B cell (primary cell): ENCODE measurements at regions of chr7 and their contacts with region 1.

Region 1: DNA sequence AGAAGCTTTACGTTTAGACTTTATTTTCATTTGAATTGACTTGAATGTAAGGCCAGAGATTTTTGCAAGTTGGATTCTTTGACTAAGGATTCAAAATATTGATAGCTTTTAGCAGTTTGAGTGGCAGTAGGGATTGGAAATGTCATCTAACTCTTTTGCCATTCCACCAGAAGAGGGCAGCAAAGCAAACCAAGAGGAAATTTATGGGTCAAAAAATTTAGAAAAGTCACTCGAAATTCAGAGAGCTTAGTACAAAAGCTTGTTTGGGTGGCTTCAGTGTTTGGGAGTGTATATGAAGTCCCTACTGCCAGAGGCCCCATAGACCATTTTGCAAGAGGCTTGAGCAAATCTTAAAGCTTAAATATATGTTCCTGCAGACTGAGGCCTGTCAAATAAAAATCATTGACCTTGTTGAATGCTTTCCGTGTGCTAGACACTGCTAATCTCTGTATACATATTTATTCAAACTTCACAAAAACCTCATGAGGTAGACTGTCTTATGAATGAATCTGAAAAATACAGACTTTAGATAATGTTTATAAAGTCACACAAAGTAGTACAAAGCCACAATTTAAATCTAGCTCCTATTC is 44.6 kb upstream of the RSBN1L start:
- DNase-seq: peak; percentile 62
- ATAC-seq: no peak
- H3K4me3 ChIP-seq: no peak overlapping the region
- H3K4me3 Mint-ChIP-seq: no peak overlapping the region
- H3K27ac ChIP-seq: no peak overlapping the region
- H3K27ac Mint-ChIP-seq: no peak overlapping the region
- H3K4me1 ChIP-seq: no peaks in the 10 kb centered on the region
- H3K4me1 Mint-ChIP-seq: no peaks in the 10 kb centered on the region
- H3K27me3 ChIP-seq: no peaks in the 10 kb centered on the region
- H3K27me3 Mint-ChIP-seq: no peaks in the 10 kb centered on the region
- CTCF ChIP-seq: peak; percentile 89

Region 2: GRCh38 chr7:77631820-77632219 is 19.8 kb before region 1 on chr7:
- CTCF ChIA-PET with region 1: interaction called, 14 read pairs
- POLR2A ChIA-PET with region 1: no interaction called
- intact Hi-C with region 1: no loop called
- DNase-seq: no peak
- ATAC-seq: no peak
- H3K4me3 ChIP-seq: no peak overlapping the region
- H3K4me3 Mint-ChIP-seq: no peak overlapping the region
- H3K27ac ChIP-seq: no peak overlapping the region
- H3K27ac Mint-ChIP-seq: no peak overlapping the region
- H3K4me1 ChIP-seq: no peaks in the 10 kb centered on the region
- H3K4me1 Mint-ChIP-seq: no peaks in the 10 kb centered on the region
- H3K27me3 ChIP-seq: no peaks in the 10 kb centered on the region
- H3K27me3 Mint-ChIP-seq: no peaks in the 10 kb centered on the region
- CTCF ChIP-seq: no peak

Region 3: DNA sequence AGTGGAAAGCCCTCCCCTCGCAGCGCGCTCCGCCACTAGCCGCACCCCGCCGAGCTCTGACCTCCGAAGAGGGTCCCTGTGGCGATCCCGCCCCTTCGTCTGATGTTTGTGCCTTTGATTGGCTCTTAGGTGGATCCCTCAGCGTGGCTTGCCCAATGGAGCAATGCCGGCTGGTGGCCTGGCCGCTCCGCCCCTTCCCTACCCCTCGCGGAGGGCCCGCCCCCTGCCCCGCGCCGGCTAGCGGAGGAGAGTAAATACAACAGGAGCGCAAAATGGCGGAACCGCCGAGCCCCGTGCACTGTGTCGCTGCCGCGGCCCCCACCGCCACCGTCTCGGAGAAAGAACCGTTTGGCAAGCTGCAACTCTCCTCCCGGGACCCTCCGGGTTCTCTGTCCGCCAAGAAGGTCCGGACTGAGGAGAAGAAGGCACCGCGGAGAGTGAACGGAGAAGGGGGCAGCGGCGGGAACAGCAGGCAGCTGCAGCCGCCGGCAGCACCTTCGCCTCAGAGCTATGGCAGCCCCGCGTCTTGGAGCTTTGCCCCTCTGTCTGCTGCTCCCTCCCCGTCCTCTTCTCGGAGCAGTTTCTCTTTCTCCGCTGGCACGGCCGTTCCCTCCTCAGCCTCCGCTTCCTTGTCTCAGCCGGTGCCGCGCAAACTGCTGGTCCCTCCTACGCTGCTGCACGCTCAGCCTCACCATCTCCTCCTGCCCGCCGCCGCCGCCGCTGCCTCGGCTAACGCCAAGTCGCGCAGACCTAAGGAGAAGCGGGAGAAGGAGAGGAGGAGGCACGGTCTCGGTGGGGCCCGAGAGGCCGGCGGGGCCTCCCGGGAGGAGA is 44.7 kb after region 1 on chr7 and contains the start of gene RSBN1L:
- CTCF ChIA-PET with region 1: interaction called, 23 read pairs
- POLR2A ChIA-PET with region 1: interaction called, 3 read pairs
- intact Hi-C with region 1: loop called (anchors 5 kb)
- DNase-seq: peak; percentile 97
- ATAC-seq: peak; percentile 94
- H3K4me3 ChIP-seq: peak within 1 kb of the TSS; percentile 72 to 100 (median 84)
- H3K4me3 Mint-ChIP-seq: peak within 1 kb of the TSS; percentile 98
- H3K27ac ChIP-seq: peak within 1 kb of the TSS; percentile 89 to 90
- H3K27ac Mint-ChIP-seq: peak within 1 kb of the TSS; percentile 97
- H3K4me1 ChIP-seq: peaks cover 20 to 35% of the 10 kb centered on the region in 2 donors
- H3K4me1 Mint-ChIP-seq: peaks cover 54% of the 10 kb centered on the region
- H3K27me3 ChIP-seq: no peaks in the 10 kb centered on the region
- H3K27me3 Mint-ChIP-seq: no peaks in the 10 kb centered on the region
- CTCF ChIP-seq: peak; percentile 61
- total RNA-seq, gene RSBN1L: 47.0 and 55.0 TPM in 2 replicates

Region 4: GRCh38 chr7:77940647-77941046 is 289.0 kb after region 1 on chr7:
- CTCF ChIA-PET with region 1: interaction called, 9 read pairs
- POLR2A ChIA-PET with region 1: no interaction called
- intact Hi-C with region 1: loop called (anchors 5 kb)
- DNase-seq: peak; percentile 15
- ATAC-seq: no peak
- H3K4me3 ChIP-seq: no peak overlapping the region
- H3K4me3 Mint-ChIP-seq: no peak overlapping the region
- H3K27ac ChIP-seq: no peak overlapping the region
- H3K27ac Mint-ChIP-seq: no peak overlapping the region
- H3K4me1 ChIP-seq: peaks cover under 1 to 3% of the 10 kb centered on the region in 2 donors
- H3K4me1 Mint-ChIP-seq: peaks cover 14% of the 10 kb centered on the region
- H3K27me3 ChIP-seq: no peaks in the 10 kb centered on the region
- H3K27me3 Mint-ChIP-seq: no peaks in the 10 kb centered on the region
- CTCF ChIP-seq: peak; percentile 73